ENCODE measurements at regions of chr6 and their contacts with region 1.

Region 1: GRCh38 chr6:1524040-1524480 is 85.7 kb upstream of the FOXC1 start:
- DNase-seq: peak; percentile 87
- H3K4me3 Mint-ChIP-seq: peak overlapping the region; percentile 42
- H3K27ac Mint-ChIP-seq: peak overlapping the region; percentile 40
- H3K4me1 Mint-ChIP-seq: peaks cover 36% of the 10 kb centered on the region
- H3K27me3 Mint-ChIP-seq: peaks cover 10% of the 10 kb centered on the region

Region 2: DNA sequence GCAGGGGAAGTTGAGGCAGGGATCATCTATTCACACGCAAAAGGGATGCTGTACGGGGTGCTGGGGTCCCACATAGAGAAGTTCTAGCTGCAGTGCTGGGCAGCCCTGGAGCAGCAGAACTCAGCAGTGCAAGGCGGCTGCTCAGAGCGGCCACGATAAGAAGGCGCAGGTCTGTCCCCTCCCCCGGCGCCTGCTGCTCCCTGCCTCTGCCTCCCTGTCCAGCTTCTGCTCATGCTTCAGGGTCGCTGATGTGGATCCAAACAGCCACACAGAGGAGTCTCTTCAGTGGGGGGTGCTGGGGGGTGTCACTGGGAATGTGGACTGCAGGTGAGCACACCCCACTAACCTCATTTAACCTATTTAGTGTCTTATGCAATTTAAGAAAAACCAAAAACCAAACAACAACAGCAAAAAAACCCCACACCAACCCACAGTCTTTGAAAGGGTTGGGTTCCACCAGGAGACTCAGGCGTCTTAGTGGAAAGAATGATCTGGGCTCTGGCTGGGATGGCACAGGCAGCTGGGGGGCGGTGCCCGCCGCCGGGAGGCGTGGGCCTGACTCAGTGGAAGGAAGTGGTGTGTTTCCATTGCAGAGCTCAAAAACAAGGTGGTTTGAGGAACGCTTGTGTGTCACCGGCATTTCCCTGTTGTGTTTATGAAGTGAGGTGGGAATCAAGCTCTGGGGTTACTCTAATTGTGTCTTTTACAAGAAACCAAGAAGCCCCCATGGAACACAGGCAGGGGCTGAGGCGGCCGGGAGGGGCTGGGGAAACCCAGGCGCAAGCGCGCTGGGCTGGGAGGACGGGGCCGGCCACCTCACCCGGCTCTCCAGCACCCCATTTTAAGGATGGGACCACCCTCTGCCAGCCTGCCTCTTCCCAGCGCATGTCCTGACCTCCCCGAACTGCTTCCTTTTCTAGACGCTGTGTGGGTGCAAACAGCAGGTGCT is 1077.4 kb before region 1 on chr6:
- CTCF ChIA-PET with region 1: no interaction called
- POLR2A ChIA-PET with region 1: no interaction called
- intact Hi-C with region 1: no loop called
- DNase-seq: peak; percentile 97
- H3K4me3 Mint-ChIP-seq: peak overlapping the region; percentile 77
- H3K27ac Mint-ChIP-seq: peak overlapping the region; percentile 97
- H3K4me1 Mint-ChIP-seq: peaks cover 55% of the 10 kb centered on the region
- H3K27me3 Mint-ChIP-seq: peaks cover 1% of the 10 kb centered on the region

Region 3: GRCh38 chr6:1363729-1364572 is 160.1 kb before region 1 on chr6:
- CTCF ChIA-PET with region 1: no interaction called
- POLR2A ChIA-PET with region 1: no interaction called
- intact Hi-C with region 1: no loop called
- DNase-seq: peak; percentile 12
- H3K4me3 Mint-ChIP-seq: no peak overlapping the region
- H3K27ac Mint-ChIP-seq: no peak overlapping the region
- H3K4me1 Mint-ChIP-seq: no peaks in the 10 kb centered on the region
- H3K27me3 Mint-ChIP-seq: peaks cover 42% of the 10 kb centered on the region

Region 4: GRCh38 chr6:1540864-1541521 is 16.9 kb after region 1 on chr6:
- CTCF ChIA-PET with region 1: interaction called, 10 read pairs
- POLR2A ChIA-PET with region 1: no interaction called
- intact Hi-C with region 1: no loop called
- DNase-seq: no peak
- H3K4me3 Mint-ChIP-seq: no peak overlapping the region
- H3K27ac Mint-ChIP-seq: no peak overlapping the region
- H3K4me1 Mint-ChIP-seq: peaks cover 9% of the 10 kb centered on the region
- H3K27me3 Mint-ChIP-seq: no peaks in the 10 kb centered on the region

Region 5: GRCh38 chr6:1554476-1555310 is 30.6 kb after region 1 on chr6:
- CTCF ChIA-PET with region 1: interaction called, 81 read pairs
- POLR2A ChIA-PET with region 1: interaction called, 5 read pairs
- intact Hi-C with region 1: loop called (anchors 1 kb)
- DNase-seq: peak; percentile 77
- H3K4me3 Mint-ChIP-seq: peak overlapping the region; percentile 81
- H3K27ac Mint-ChIP-seq: peak overlapping the region; percentile 77
- H3K4me1 Mint-ChIP-seq: peaks cover 24% of the 10 kb centered on the region
- H3K27me3 Mint-ChIP-seq: peaks cover 17% of the 10 kb centered on the region

Region 6: GRCh38 chr6:3269281-3269975 is 1745.4 kb after region 1 on chr6:
- CTCF ChIA-PET with region 1: no interaction called
- POLR2A ChIA-PET with region 1: no interaction called
- intact Hi-C with region 1: no loop called
- DNase-seq: peak; percentile 51
- H3K4me3 Mint-ChIP-seq: no peak overlapping the region
- H3K27ac Mint-ChIP-seq: no peak overlapping the region
- H3K4me1 Mint-ChIP-seq: peaks cover 41% of the 10 kb centered on the region
- H3K27me3 Mint-ChIP-seq: no peaks in the 10 kb centered on the region

Measured in activated CD4-positive, alpha-beta memory T cell treated with anti-CD3 and anti-CD28 coated beads for 36 hours (primary cell).